ENCODE measurements at regions of chr5 and their contacts with region 1.

Region 1: GRCh38 chr5:111735583-111736270 is 21.3 kb downstream of the NREP start:
- DNase-seq: peak; percentile 98
- ATAC-seq: peak; percentile 89
- H3K4me3 ChIP-seq: no peak overlapping the region
- H3K27ac ChIP-seq: no peak overlapping the region
- H3K4me1 ChIP-seq: peaks cover 31% of the 10 kb centered on the region
- H3K27me3 ChIP-seq: no peaks in the 10 kb centered on the region
- CTCF ChIP-seq: no peak
- POLR2A ChIP-seq: no peak
- RAD21 ChIP-seq: no peak

Region 2: GRCh38 chr5:111641533-111642230 is 94.0 kb before region 1 on chr5:
- CTCF ChIA-PET with region 1: no interaction called
- POLR2A ChIA-PET with region 1: no interaction called
- dilution Hi-C with region 1: no loop called
- in situ Hi-C with region 1: no loop called
- intact Hi-C with region 1: loop called (anchors 5 kb)
- DNase-seq: peak; percentile 90
- ATAC-seq: peak; percentile 98
- H3K4me3 ChIP-seq: no peak overlapping the region
- H3K27ac ChIP-seq: no peak overlapping the region
- H3K4me1 ChIP-seq: peaks cover 1% of the 10 kb centered on the region; the same call in 1 of the 2 replicates
- H3K27me3 ChIP-seq: peaks cover 29% of the 10 kb centered on the region
- CTCF ChIP-seq: no peak
- POLR2A ChIP-seq: no peak
- RAD21 ChIP-seq: no peak

Region 3: GRCh38 chr5:111997711-111998110 is 262.0 kb after region 1 on chr5:
- CTCF ChIA-PET with region 1: no interaction called
- POLR2A ChIA-PET with region 1: no interaction called
- dilution Hi-C with region 1: no loop called
- in situ Hi-C with region 1: loop called (anchors 5 kb)
- intact Hi-C with region 1: loop called (anchors 1 kb)
- DNase-seq: peak; percentile 100
- ATAC-seq: peak; percentile 87
- H3K4me3 ChIP-seq: no peak overlapping the region
- H3K27ac ChIP-seq: no peak overlapping the region
- H3K4me1 ChIP-seq: peaks cover 15% of the 10 kb centered on the region
- H3K27me3 ChIP-seq: no peaks in the 10 kb centered on the region
- CTCF ChIP-seq: no peak
- POLR2A ChIP-seq: no peak
- RAD21 ChIP-seq: 0 out of 2 replicates have a peak, but pooled peaks have one; percentile 7

Region 4: DNA sequence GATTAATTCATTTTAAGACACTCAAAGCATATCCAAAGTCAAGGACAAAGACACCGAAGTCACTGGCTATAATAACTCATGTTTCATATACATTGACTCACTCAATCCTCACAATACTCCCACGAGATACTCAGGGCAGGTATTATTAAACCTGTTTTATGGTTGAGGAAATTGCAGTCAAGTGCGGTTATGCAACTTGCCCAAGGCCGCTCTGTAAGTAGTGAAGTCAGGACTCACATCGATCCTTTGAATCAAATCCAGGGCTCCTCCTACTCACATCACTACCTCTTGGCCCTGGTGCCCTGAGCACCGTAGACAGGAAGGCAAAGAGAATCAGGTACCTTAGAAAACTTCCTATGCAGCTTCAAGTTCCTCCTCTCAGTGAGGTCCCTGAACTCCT is 914.2 kb after region 1 on chr5:
- CTCF ChIA-PET with region 1: no interaction called
- POLR2A ChIA-PET with region 1: no interaction called
- dilution Hi-C with region 1: no loop called
- in situ Hi-C with region 1: no loop called
- intact Hi-C with region 1: no loop called
- DNase-seq: no peak
- ATAC-seq: no peak
- H3K4me3 ChIP-seq: no peak overlapping the region
- H3K27ac ChIP-seq: no peak overlapping the region
- H3K4me1 ChIP-seq: no peaks in the 10 kb centered on the region
- H3K27me3 ChIP-seq: no peaks in the 10 kb centered on the region; the same call in none of the 2 replicates
- CTCF ChIP-seq: no peak
- POLR2A ChIP-seq: no peak
- RAD21 ChIP-seq: no peak